GM12878 (cell line): ENCODE measurements at regions of chr1 and their contacts with region 1.

Region 1: GRCh38 chr1:201895913-201896807 is 7.5 kb downstream of the SHISA4 start:
- DNase-seq: peak; percentile 40
- ATAC-seq: peak; percentile 98
- H3K4me3 ChIP-seq: no peak overlapping the region
- H3K27ac ChIP-seq: no peak overlapping the region
- H3K4me1 ChIP-seq: no peaks in the 10 kb centered on the region
- H3K27me3 ChIP-seq: no peaks in the 10 kb centered on the region
- CTCF ChIP-seq: peak; percentile 92 to 95 (median 93)
- EP300 ChIP-seq: no peak
- POLR2A ChIP-seq: no peak
- RAD21 ChIP-seq: peak; percentile 87

Region 2: DNA sequence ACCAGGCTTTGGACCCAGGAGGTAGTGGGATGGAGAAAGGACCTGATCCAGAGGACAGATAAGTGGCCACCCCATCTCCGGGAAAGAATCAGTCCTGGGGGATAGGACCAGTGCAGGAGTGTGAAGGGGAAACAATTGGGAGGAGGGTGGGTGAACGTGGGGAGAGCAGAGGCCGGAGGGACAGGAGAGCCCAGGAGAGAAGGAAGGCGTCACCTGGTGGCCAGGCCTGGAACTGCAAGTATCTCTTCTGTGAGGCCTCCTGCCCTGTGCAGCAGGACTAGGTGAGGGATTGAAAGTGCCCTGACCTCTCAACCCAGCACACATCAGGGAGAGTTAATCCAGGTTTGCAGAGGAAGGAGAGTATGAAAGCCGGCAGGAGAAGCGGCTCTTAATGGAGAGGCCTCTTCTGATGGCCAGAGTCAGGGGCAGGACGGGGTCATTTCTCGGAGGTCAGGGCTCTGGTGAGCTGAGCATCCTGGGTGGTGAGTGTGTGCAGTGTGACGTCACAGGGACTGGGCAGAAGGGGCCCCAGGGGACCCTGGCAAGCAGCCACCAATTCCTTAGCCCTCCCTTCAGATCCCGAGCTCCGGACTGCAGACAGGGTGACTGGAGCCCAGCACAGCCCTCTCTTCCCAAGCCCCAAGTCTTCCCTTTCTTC is 487.9 kb before region 1 on chr1:
- CTCF ChIA-PET with region 1: no interaction called
- POLR2A ChIA-PET with region 1: no interaction called
- RAD21 ChIA-PET with region 1: no interaction called
- SMC1A ChIA-PET with region 1: no interaction called
- in situ Hi-C with region 1: no loop called
- intact Hi-C with region 1: no loop called
- DNase-seq: no peak
- ATAC-seq: peak; percentile 51
- H3K4me3 ChIP-seq: no peak overlapping the region
- H3K27ac ChIP-seq: no peak overlapping the region
- H3K4me1 ChIP-seq: peaks cover 35% of the 10 kb centered on the region
- H3K27me3 ChIP-seq: no peaks in the 10 kb centered on the region; a peak in 1 of 4 replicates
- CTCF ChIP-seq: peak; percentile 96 to 99 (median 98); a peak in 5 of 6 replicates
- EP300 ChIP-seq: no peak
- POLR2A ChIP-seq: no peak
- RAD21 ChIP-seq: peak; percentile 70

Region 3: GRCh38 chr1:201850053-201850397 is 46.1 kb before region 1 on chr1:
- CTCF ChIA-PET with region 1: interaction called, 10 read pairs
- POLR2A ChIA-PET with region 1: no interaction called
- RAD21 ChIA-PET with region 1: no interaction called
- SMC1A ChIA-PET with region 1: no interaction called
- in situ Hi-C with region 1: no loop called
- intact Hi-C with region 1: no loop called
- DNase-seq: no peak
- ATAC-seq: no peak
- H3K4me3 ChIP-seq: no peak overlapping the region
- H3K27ac ChIP-seq: no peak overlapping the region
- H3K4me1 ChIP-seq: no peaks in the 10 kb centered on the region
- H3K27me3 ChIP-seq: no peaks in the 10 kb centered on the region
- CTCF ChIP-seq: no peak
- EP300 ChIP-seq: no peak
- POLR2A ChIP-seq: no peak
- RAD21 ChIP-seq: no peak

Region 4: DNA sequence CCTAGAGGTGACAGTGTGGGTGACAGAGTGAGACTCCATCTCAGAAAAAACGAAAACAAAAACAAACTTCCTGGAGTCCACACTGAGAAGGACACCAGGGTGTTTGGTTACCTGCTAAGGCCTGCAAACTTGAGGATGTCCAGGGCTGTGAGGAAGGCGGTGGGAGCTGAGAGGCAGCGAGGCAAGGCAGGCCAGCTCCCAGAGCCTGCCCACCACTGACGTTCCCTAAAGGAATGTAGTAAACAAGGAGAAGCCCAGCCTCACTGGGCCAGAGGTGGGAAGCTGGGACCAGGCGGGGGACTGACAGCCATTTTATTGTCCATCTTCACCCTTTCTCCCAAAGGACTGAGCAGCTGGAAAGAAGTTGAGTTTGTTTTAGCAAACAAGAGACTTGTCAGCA is 16.7 kb after region 1 on chr1:
- CTCF ChIA-PET with region 1: interaction called, 17 read pairs
- POLR2A ChIA-PET with region 1: interaction called, 3 read pairs
- RAD21 ChIA-PET with region 1: no interaction called
- SMC1A ChIA-PET with region 1: interaction called, 7 read pairs
- in situ Hi-C with region 1: no loop called
- intact Hi-C with region 1: no loop called
- DNase-seq: no peak
- ATAC-seq: no peak
- H3K4me3 ChIP-seq: no peak overlapping the region
- H3K27ac ChIP-seq: no peak overlapping the region
- H3K4me1 ChIP-seq: peaks cover 4% of the 10 kb centered on the region; the same call in 1 of the 2 replicates
- H3K27me3 ChIP-seq: no peaks in the 10 kb centered on the region; a peak in 2 of 4 replicates
- CTCF ChIP-seq: no peak
- EP300 ChIP-seq: no peak
- POLR2A ChIP-seq: no peak
- RAD21 ChIP-seq: no peak

Region 5: GRCh38 chr1:201955009-201955728 is 59.0 kb after region 1 on chr1 and contains the start of gene TIMM17A:
- CTCF ChIA-PET with region 1: interaction called, 13 read pairs
- POLR2A ChIA-PET with region 1: no interaction called
- RAD21 ChIA-PET with region 1: interaction called, 3 read pairs
- SMC1A ChIA-PET with region 1: interaction called, 5 read pairs
- in situ Hi-C with region 1: no loop called
- intact Hi-C with region 1: no loop called
- DNase-seq: peak; percentile 91
- ATAC-seq: peak; percentile 100
- H3K4me3 ChIP-seq: peak within 1 kb of the TSS; percentile 91
- H3K27ac ChIP-seq: peak within 1 kb of the TSS; percentile 91
- H3K4me1 ChIP-seq: no peaks in the 10 kb centered on the region; the same call in 1 of the 2 replicates
- H3K27me3 ChIP-seq: no peaks in the 10 kb centered on the region
- CTCF ChIP-seq: no peak
- EP300 ChIP-seq: peak in 1 of 2 experiments; percentile 47; a peak in 1 of 4 replicates
- POLR2A ChIP-seq: peak; percentile 99
- RAD21 ChIP-seq: no peak
- polyA plus RNA-seq, gene TIMM17A: 248 to 357 TPM

Region 6: GRCh38 chr1:201999625-202000238 is 103.6 kb after region 1 on chr1:
- CTCF ChIA-PET with region 1: interaction called, 18 read pairs
- POLR2A ChIA-PET with region 1: no interaction called
- RAD21 ChIA-PET with region 1: interaction called, 11 read pairs
- SMC1A ChIA-PET with region 1: interaction called, 5 read pairs
- in situ Hi-C with region 1: no loop called
- intact Hi-C with region 1: no loop called
- DNase-seq: no peak
- ATAC-seq: peak; percentile 92
- H3K4me3 ChIP-seq: no peak overlapping the region
- H3K27ac ChIP-seq: no peak overlapping the region
- H3K4me1 ChIP-seq: no peaks in the 10 kb centered on the region
- H3K27me3 ChIP-seq: no peaks in the 10 kb centered on the region
- CTCF ChIP-seq: peak; percentile 67 to 73 (median 72)
- EP300 ChIP-seq: no peak
- POLR2A ChIP-seq: 0 out of 2 replicates have a peak, but pooled peaks have one; percentile 25
- RAD21 ChIP-seq: peak; percentile 42; the same call in 1 of the 2 replicates